GM12878 (cell line): ENCODE measurements at regions of chr3 and their contacts with region 1.

Region 1: DNA sequence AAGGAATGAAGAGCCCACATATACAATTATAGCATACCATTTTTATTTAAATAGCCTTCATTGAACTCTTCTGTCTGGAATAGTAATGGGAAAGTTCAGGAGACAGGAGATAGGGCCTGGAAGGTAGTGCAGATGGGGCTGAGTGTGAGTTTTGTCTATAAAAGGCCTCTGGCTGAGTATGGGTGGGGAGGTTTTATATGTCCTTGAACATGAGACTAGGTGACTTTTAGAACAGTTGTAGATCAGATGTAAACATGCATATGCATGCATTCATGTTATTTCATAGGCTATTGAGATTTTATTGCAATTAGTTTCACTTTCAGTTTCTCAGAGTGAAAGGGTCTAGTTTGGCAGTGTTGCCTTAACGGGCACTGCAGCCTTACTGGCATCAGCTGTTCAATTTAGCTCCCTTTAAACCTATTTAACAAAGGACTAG is 27.1 kb downstream of the CGGBP1 start:
- DNase-seq: peak; percentile 26
- ATAC-seq: peak; percentile 92
- H3K4me3 ChIP-seq: peak overlapping the region; percentile 52
- H3K27ac ChIP-seq: peak overlapping the region; percentile 27; the same call in 1 of the 2 replicates
- H3K4me1 ChIP-seq: no peaks in the 10 kb centered on the region
- H3K27me3 ChIP-seq: no peaks in the 10 kb centered on the region
- CTCF ChIP-seq: no peak
- EP300 ChIP-seq: no peak
- POLR2A ChIP-seq: no peak
- RAD21 ChIP-seq: no peak

Region 2: GRCh38 chr3:88058591-88059368 is 27.1 kb after region 1 on chr3 and contains the starts of genes CGGBP1 and ZNF654:
- CTCF ChIA-PET with region 1: interaction called, 10 read pairs
- POLR2A ChIA-PET with region 1: interaction called, 4 read pairs
- RAD21 ChIA-PET with region 1: interaction called, 12 read pairs
- SMC1A ChIA-PET with region 1: interaction called, 17 read pairs
- in situ Hi-C with region 1: no loop called
- intact Hi-C with region 1: no loop called
- DNase-seq: peak; percentile 95
- ATAC-seq: peak; percentile 93
- H3K4me3 ChIP-seq: peak within 1 kb of the TSS; percentile 94
- H3K27ac ChIP-seq: peak within 1 kb of the TSS; percentile 86
- H3K4me1 ChIP-seq: peaks cover 2% of the 10 kb centered on the region; the same call in 1 of the 2 replicates
- H3K27me3 ChIP-seq: no peaks in the 10 kb centered on the region
- CTCF ChIP-seq: no peak
- EP300 ChIP-seq: no peak
- POLR2A ChIP-seq: peak; percentile 85
- RAD21 ChIP-seq: no peak
- polyA plus RNA-seq, gene CGGBP1: 27.8 to 30.0 TPM
- polyA plus RNA-seq, gene ZNF654: 2.7 to 2.8 TPM

Region 3: GRCh38 chr3:88141458-88142083 is 109.9 kb after region 1 on chr3:
- CTCF ChIA-PET with region 1: no interaction called
- POLR2A ChIA-PET with region 1: no interaction called
- RAD21 ChIA-PET with region 1: no interaction called
- SMC1A ChIA-PET with region 1: no interaction called
- in situ Hi-C with region 1: no loop called
- intact Hi-C with region 1: no loop called
- DNase-seq: no peak
- ATAC-seq: peak; percentile 20; the same call in 2 of the 3 replicates
- H3K4me3 ChIP-seq: no peak overlapping the region
- H3K27ac ChIP-seq: no peak overlapping the region
- H3K4me1 ChIP-seq: no peaks in the 10 kb centered on the region; the same call in 1 of the 2 replicates
- H3K27me3 ChIP-seq: no peaks in the 10 kb centered on the region
- CTCF ChIP-seq: no peak
- EP300 ChIP-seq: no peak
- POLR2A ChIP-seq: no peak
- RAD21 ChIP-seq: no peak